ENCODE measurements at regions of chr16 and their contacts with region 1.

Region 1: GRCh38 chr16:77660311-77660710 is 62.0 kb upstream of the NUDT7 start:
- DNase-seq: no peak
- ATAC-seq: no peak
- H3K4me3 ChIP-seq: no peak overlapping the region
- H3K27ac ChIP-seq: no peak overlapping the region
- H3K4me1 ChIP-seq: no peaks in the 10 kb centered on the region
- H3K27me3 ChIP-seq: peaks cover 0 to 3% (median 0%) of the 10 kb centered on the region in 3 donors
- CTCF ChIP-seq: peak in 3 of 5 experiments; percentile 8 to 45 (median 39)
- POLR2A ChIP-seq: no peak

Region 2: GRCh38 chr16:77599793-77600415 is 60.4 kb before region 1 on chr16:
- in situ Hi-C with region 1: no loop called
- intact Hi-C with region 1: loop called (anchors 10 kb)
- DNase-seq: no peak
- ATAC-seq: no peak
- H3K4me3 ChIP-seq: no peak overlapping the region
- H3K27ac ChIP-seq: no peak overlapping the region
- H3K4me1 ChIP-seq: peaks cover under 1 to 4% of the 10 kb centered on the region in 2 donors
- H3K27me3 ChIP-seq: no peaks in the 10 kb centered on the region
- CTCF ChIP-seq: peak in 2 of 5 experiments; percentile 38 to 41
- POLR2A ChIP-seq: no peak

Region 3: DNA sequence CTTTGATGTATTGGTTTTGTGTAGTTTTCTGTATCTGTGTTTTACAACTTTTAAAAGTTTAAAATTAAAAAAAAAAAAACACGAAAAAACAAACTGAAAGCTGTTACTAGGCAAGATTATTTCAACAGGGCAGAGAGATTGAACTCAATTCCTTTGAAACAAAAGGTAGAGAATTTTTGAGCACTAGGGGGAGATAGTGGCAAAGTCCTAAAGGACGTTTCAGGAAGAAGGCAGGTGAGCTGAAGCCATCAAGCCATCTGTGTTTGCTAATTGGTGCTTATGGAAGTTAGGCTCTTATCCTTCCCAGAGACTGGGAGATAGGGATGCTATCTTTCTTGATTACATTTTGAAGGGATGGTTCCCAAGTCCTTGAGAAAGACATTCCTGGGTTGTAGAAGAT is 291.5 kb after region 1 on chr16:
- in situ Hi-C with region 1: no loop called
- intact Hi-C with region 1: no loop called
- DNase-seq: no peak
- ATAC-seq: no peak
- H3K4me3 ChIP-seq: no peak overlapping the region
- H3K27ac ChIP-seq: no peak overlapping the region
- H3K4me1 ChIP-seq: no peaks in the 10 kb centered on the region
- H3K27me3 ChIP-seq: peaks cover 0 to 13% (median 0%) of the 10 kb centered on the region in 3 donors
- CTCF ChIP-seq: no peak
- POLR2A ChIP-seq: no peak

Measured in gastrocnemius medialis (tissue), 4 donors.